ENCODE measurements at regions of chr12 and their contacts with region 1.

Region 1: GRCh38 chr12:101336437-101336836 is 56.5 kb downstream of the UTP20 start:
- DNase-seq: no peak
- ATAC-seq: no peak
- H3K4me3 ChIP-seq: no peak overlapping the region
- H3K27ac ChIP-seq: no peak overlapping the region
- H3K4me1 ChIP-seq: no peaks in the 10 kb centered on the region
- H3K27me3 ChIP-seq: no peaks in the 10 kb centered on the region
- CTCF ChIP-seq: no peak
- EP300 ChIP-seq: no peak
- POLR2A ChIP-seq: no peak
- RAD21 ChIP-seq: no peak

Region 2: GRCh38 chr12:100827901-100828520 is 508.4 kb before region 1 on chr12:
- CTCF ChIA-PET with region 1: no interaction called
- POLR2A ChIA-PET with region 1: no interaction called
- in situ Hi-C with region 1: no loop called
- intact Hi-C with region 1: no loop called
- DNase-seq: peak; percentile 13
- ATAC-seq: peak; percentile 76
- H3K4me3 ChIP-seq: no peak overlapping the region
- H3K27ac ChIP-seq: no peak overlapping the region
- H3K4me1 ChIP-seq: no peaks in the 10 kb centered on the region
- H3K27me3 ChIP-seq: no peaks in the 10 kb centered on the region
- CTCF ChIP-seq: peak; percentile 64
- EP300 ChIP-seq: no peak
- POLR2A ChIP-seq: no peak
- RAD21 ChIP-seq: no peak

Region 3: DNA sequence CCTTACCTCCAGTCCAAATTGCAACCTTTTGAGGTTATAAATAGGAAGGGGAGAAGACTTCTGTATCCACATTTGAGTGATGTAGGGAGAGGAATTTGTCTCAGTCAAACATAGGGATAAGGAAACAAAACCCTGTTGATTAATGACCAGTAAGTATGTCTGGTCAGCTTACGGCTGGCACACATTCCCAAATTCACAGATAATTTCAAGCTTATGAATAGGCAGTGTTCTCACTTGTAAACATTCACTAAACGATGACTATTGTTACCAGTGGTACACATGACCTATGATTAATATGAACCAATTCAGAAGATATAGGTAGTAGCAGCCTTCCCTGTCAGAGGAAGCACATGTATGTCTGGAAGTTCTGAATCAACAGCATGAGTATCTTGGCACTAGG is 93.4 kb before region 1 on chr12:
- CTCF ChIA-PET with region 1: no interaction called
- POLR2A ChIA-PET with region 1: no interaction called
- in situ Hi-C with region 1: no loop called
- intact Hi-C with region 1: no loop called
- DNase-seq: no peak
- ATAC-seq: no peak
- H3K4me3 ChIP-seq: no peak overlapping the region
- H3K27ac ChIP-seq: no peak overlapping the region
- H3K4me1 ChIP-seq: no peaks in the 10 kb centered on the region
- H3K27me3 ChIP-seq: peaks cover 0 to 10% of the 10 kb centered on the region in 2 experiments; a peak in 4 of 5 replicates
- CTCF ChIP-seq: no peak
- EP300 ChIP-seq: no peak
- POLR2A ChIP-seq: no peak
- RAD21 ChIP-seq: no peak

Region 4: DNA sequence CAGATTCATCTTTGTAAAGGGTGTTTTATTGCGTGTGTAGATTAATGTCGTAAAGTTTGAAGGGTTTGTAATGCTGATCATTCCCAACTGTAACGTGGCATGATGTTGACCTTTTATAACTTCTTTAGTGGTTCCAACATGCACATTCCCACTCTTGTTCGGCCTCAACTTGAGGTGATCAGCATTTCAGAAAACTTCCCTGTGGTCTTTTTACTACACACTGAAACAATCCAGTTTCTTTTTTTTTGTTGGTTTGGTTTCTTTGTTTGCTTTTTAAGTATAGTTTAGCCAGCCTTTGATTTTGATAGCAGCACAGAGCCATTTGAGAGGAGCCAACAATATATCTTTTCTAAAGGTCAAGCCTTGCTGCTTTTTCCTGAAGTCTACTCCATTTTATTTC is 33.7 kb before region 1 on chr12:
- CTCF ChIA-PET with region 1: no interaction called
- POLR2A ChIA-PET with region 1: no interaction called
- in situ Hi-C with region 1: no loop called
- intact Hi-C with region 1: loop called (anchors 2 kb)
- DNase-seq: no peak
- ATAC-seq: no peak
- H3K4me3 ChIP-seq: no peak overlapping the region
- H3K27ac ChIP-seq: no peak overlapping the region
- H3K4me1 ChIP-seq: no peaks in the 10 kb centered on the region
- H3K27me3 ChIP-seq: no peaks in the 10 kb centered on the region
- CTCF ChIP-seq: no peak
- EP300 ChIP-seq: no peak
- POLR2A ChIP-seq: no peak
- RAD21 ChIP-seq: no peak

Region 5: GRCh38 chr12:101470939-101471338 is 134.5 kb after region 1 on chr12:
- CTCF ChIA-PET with region 1: no interaction called
- POLR2A ChIA-PET with region 1: no interaction called
- in situ Hi-C with region 1: no loop called
- intact Hi-C with region 1: no loop called
- DNase-seq: no peak
- ATAC-seq: no peak
- H3K4me3 ChIP-seq: no peak overlapping the region
- H3K27ac ChIP-seq: no peak overlapping the region
- H3K4me1 ChIP-seq: no peaks in the 10 kb centered on the region
- H3K27me3 ChIP-seq: peaks cover 0 to 19% of the 10 kb centered on the region in 2 experiments; a peak in 2 of 5 replicates
- CTCF ChIP-seq: no peak
- EP300 ChIP-seq: no peak
- POLR2A ChIP-seq: no peak
- RAD21 ChIP-seq: no peak